ENCODE measurements at regions of chr3 and their contacts with region 1.

Region 1: DNA sequence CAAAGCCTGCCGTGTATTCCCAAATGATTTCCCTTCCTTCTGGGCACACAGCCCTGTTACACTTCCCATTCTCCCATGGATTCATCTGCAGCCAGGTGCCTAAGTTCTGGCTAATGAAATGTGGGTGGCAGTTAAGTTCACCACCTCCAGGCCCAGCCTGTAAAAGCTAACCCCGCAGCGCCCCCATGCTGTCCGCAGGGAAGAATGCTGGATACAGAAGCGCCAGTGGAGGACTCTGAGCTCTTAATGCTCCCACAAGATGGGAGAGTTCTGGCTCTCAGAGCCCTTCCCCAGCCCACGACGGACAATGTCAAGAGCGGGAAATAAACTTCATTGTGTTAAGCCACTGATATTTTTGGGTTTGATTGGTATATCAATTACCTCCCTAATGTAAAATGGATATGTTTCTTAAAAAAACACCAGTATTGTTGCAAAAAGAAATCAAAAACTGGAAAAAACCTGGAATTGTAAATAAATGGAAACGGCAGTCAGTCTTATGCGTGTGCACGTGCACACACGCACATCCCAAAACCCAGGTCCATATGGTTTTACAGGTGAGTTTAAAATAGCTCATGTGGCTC is 37.7 kb upstream of the FGD5 start:
- DNase-seq: peak; percentile 70
- ATAC-seq: peak; percentile 79
- H3K4me3 Mint-ChIP-seq: no peak overlapping the region
- H3K27ac Mint-ChIP-seq: no peak overlapping the region
- H3K4me1 Mint-ChIP-seq: no peaks in the 10 kb centered on the region
- H3K27me3 Mint-ChIP-seq: peaks cover 1% of the 10 kb centered on the region

Region 2: GRCh38 chr3:14508961-14509795 is 271.8 kb before region 1 on chr3:
- CTCF ChIA-PET with region 1: interaction called, 5 read pairs
- POLR2A ChIA-PET with region 1: no interaction called
- intact Hi-C with region 1: loop called in 1 of 2 experiments (anchors 1 kb)
- DNase-seq: peak; percentile 87
- ATAC-seq: peak; percentile 91
- H3K4me3 Mint-ChIP-seq: no peak overlapping the region
- H3K27ac Mint-ChIP-seq: no peak overlapping the region
- H3K4me1 Mint-ChIP-seq: peaks cover 2% of the 10 kb centered on the region
- H3K27me3 Mint-ChIP-seq: peaks cover 4% of the 10 kb centered on the region

Region 3: DNA sequence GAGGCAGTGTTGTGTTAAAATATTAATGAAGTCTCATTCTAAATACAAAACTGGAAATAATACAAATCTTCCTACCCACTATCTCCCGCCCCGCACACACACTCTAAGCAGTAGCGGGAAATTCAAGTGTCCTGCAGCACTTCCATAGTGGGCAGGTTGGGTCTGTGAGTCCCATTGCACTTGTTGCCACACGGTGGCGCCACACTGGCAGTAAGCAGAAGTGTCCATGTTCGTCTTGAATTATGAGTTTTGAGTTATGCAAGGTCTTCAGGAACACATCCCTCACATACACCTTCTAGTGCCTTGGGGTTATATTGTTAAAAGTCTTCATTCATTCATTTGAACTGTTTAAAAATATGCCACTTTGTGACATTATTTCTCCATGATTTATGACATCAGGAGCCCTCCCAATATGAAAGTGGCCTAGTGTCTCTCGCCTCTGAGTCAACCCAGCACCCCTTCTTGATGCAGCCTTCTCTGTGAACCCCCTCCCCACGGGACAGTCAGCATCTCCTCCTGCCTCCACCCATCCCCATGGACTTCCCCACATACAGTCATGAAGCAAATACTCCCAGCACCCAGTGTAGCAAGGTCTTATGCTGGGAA is 147.1 kb before region 1 on chr3:
- CTCF ChIA-PET with region 1: interaction called, 6 read pairs
- POLR2A ChIA-PET with region 1: no interaction called
- intact Hi-C with region 1: loop called in 1 of 2 experiments (anchors 1 kb)
- DNase-seq: peak; percentile 78
- ATAC-seq: peak; percentile 76
- H3K4me3 Mint-ChIP-seq: no peak overlapping the region
- H3K27ac Mint-ChIP-seq: no peak overlapping the region
- H3K4me1 Mint-ChIP-seq: no peaks in the 10 kb centered on the region
- H3K27me3 Mint-ChIP-seq: peaks cover 23% of the 10 kb centered on the region

Region 4: DNA sequence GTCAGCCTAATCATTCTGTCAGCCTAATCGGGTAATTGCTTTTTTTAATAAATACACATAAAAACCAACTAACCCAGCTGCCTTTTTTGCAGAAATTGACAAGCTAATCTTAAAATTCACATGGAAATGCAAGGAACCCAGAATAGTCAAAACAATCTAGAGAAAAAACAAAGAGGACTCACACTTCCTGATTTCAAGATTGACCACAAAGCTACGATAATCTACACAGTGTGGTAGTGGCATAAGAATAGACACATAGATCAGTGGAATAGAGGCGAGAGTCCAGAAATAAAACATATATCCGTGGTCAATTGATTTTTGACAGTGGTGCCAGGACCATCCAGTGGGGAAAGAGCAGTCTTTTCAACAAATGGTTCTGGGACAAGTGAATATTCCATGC is 108.4 kb before region 1 on chr3:
- CTCF ChIA-PET with region 1: interaction called, 3 read pairs
- POLR2A ChIA-PET with region 1: no interaction called
- intact Hi-C with region 1: loop called in 1 of 2 experiments (anchors 5 kb)
- DNase-seq: no peak
- ATAC-seq: no peak
- H3K4me3 Mint-ChIP-seq: no peak overlapping the region
- H3K27ac Mint-ChIP-seq: no peak overlapping the region
- H3K4me1 Mint-ChIP-seq: no peaks in the 10 kb centered on the region
- H3K27me3 Mint-ChIP-seq: no peaks in the 10 kb centered on the region